Naive thymus-derived CD4-positive, alpha-beta T cell (primary cell): ENCODE measurements at regions of chr4 and their contacts with region 1.

Region 1: GRCh38 chr4:102449751-102450352 is 51.3 kb upstream of the NFKB1 start:
- DNase-seq: peak in 7 of 9 donors; percentile 52 to 78 (median 71)
- ATAC-seq: peak; percentile 85
- H3K4me3 ChIP-seq: no peak overlapping the region
- H3K4me3 Mint-ChIP-seq: no peak overlapping the region
- H3K27ac ChIP-seq: no peak overlapping the region
- H3K27ac Mint-ChIP-seq: peak overlapping the region in 2 of 9 donors; percentile 16 to 56
- H3K4me1 ChIP-seq: no peaks in the 10 kb centered on the region
- H3K4me1 Mint-ChIP-seq: peaks cover 2 to 48% (median 9%) of the 10 kb centered on the region in 7 donors
- H3K27me3 ChIP-seq: no peaks in the 10 kb centered on the region
- H3K27me3 Mint-ChIP-seq: peaks cover 0 to 5% (median 0%) of the 10 kb centered on the region in 5 donors

Region 2: DNA sequence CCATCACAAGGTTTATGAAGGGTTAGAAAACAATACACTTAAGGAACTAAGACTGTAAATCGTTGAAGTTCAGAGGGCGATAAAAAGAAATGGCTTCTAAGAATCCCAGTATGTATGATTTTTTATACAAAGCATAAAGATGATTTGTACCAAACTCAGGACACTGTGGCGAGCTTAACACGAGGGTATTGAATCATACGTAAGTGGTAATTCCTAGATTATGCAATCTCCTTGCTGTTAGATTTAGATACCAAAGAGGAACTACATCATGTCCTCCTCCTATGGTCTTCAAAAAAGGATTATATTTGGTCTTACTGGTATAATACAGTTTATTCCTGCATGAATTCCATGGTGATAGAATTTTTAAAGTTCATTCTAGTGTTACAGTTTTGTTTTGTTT is 75.2 kb after region 1 on chr4:
- CTCF ChIA-PET with region 1: no interaction called
- POLR2A ChIA-PET with region 1: no interaction called
- intact Hi-C with region 1: loop called in 1 of 2 experiments (anchors 5 kb)
- DNase-seq: no peak
- ATAC-seq: peak; percentile 51
- H3K4me3 ChIP-seq: no peak overlapping the region
- H3K4me3 Mint-ChIP-seq: peak overlapping the region in 3 of 10 donors; percentile 7 to 56 (median 8)
- H3K27ac ChIP-seq: no peak overlapping the region
- H3K27ac Mint-ChIP-seq: peak overlapping the region in 8 of 9 donors; percentile 11 to 95 (median 75)
- H3K4me1 ChIP-seq: peaks cover 11 to 63% of the 10 kb centered on the region in 2 donors
- H3K4me1 Mint-ChIP-seq: peaks cover 52 to 100% (median 90%) of the 10 kb centered on the region in 7 donors
- H3K27me3 ChIP-seq: no peaks in the 10 kb centered on the region
- H3K27me3 Mint-ChIP-seq: no peaks in the 10 kb centered on the region

Region 3: GRCh38 chr4:102554482-102554881 is 104.6 kb after region 1 on chr4:
- CTCF ChIA-PET with region 1: no interaction called
- POLR2A ChIA-PET with region 1: no interaction called
- intact Hi-C with region 1: loop called in 1 of 2 experiments (anchors 5 kb)
- DNase-seq: no peak
- ATAC-seq: no peak
- H3K4me3 ChIP-seq: no peak overlapping the region
- H3K4me3 Mint-ChIP-seq: no peak overlapping the region
- H3K27ac ChIP-seq: no peak overlapping the region
- H3K27ac Mint-ChIP-seq: peak overlapping the region in 2 of 9 donors; percentile 10 to 84
- H3K4me1 ChIP-seq: peaks cover 14 to 32% of the 10 kb centered on the region in 2 donors
- H3K4me1 Mint-ChIP-seq: peaks cover 38 to 54% (median 47%) of the 10 kb centered on the region in 7 donors
- H3K27me3 ChIP-seq: no peaks in the 10 kb centered on the region
- H3K27me3 Mint-ChIP-seq: no peaks in the 10 kb centered on the region

Region 4: GRCh38 chr4:103008875-103009729 is 559.2 kb after region 1 on chr4:
- CTCF ChIA-PET with region 1: interaction called, 4 read pairs
- POLR2A ChIA-PET with region 1: no interaction called
- intact Hi-C with region 1: loop called (anchors 1 kb)
- DNase-seq: peak in 7 of 9 donors; percentile 39 to 67 (median 56)
- ATAC-seq: peak; percentile 93
- H3K4me3 ChIP-seq: no peak overlapping the region
- H3K4me3 Mint-ChIP-seq: no peak overlapping the region
- H3K27ac ChIP-seq: no peak overlapping the region
- H3K27ac Mint-ChIP-seq: no peak overlapping the region
- H3K4me1 ChIP-seq: no peaks in the 10 kb centered on the region
- H3K4me1 Mint-ChIP-seq: peaks cover 0 to 3% (median 0%) of the 10 kb centered on the region in 7 donors
- H3K27me3 ChIP-seq: no peaks in the 10 kb centered on the region
- H3K27me3 Mint-ChIP-seq: peaks cover 0 to 14% (median 0%) of the 10 kb centered on the region in 5 donors

Region 5: GRCh38 chr4:103934178-103934789 is 1484.4 kb after region 1 on chr4:
- CTCF ChIA-PET with region 1: no interaction called
- POLR2A ChIA-PET with region 1: no interaction called
- intact Hi-C with region 1: no loop called
- DNase-seq: peak in 2 of 9 donors; percentile 3
- ATAC-seq: no peak
- H3K4me3 ChIP-seq: no peak overlapping the region
- H3K4me3 Mint-ChIP-seq: no peak overlapping the region
- H3K27ac ChIP-seq: no peak overlapping the region
- H3K27ac Mint-ChIP-seq: no peak overlapping the region
- H3K4me1 ChIP-seq: no peaks in the 10 kb centered on the region
- H3K4me1 Mint-ChIP-seq: no peaks in the 10 kb centered on the region
- H3K27me3 ChIP-seq: no peaks in the 10 kb centered on the region
- H3K27me3 Mint-ChIP-seq: no peaks in the 10 kb centered on the region